Endothelial cell of umbilical vein (primary cell): ENCODE measurements at regions of chr13 and their contacts with region 1.

Region 1: GRCh38 chr13:48580185-48580803 is 47.4 kb upstream of the RCBTB2 start:
- DNase-seq: peak; percentile 87
- H3K4me3 ChIP-seq: no peak overlapping the region
- H3K27ac ChIP-seq: no peak overlapping the region
- H3K4me1 ChIP-seq: peaks cover 13% of the 10 kb centered on the region
- H3K27me3 ChIP-seq: peaks cover 0 to 4% of the 10 kb centered on the region in 2 experiments
- CTCF ChIP-seq: peak; percentile 45 to 46
- POLR2A ChIP-seq: no peak

Region 2: DNA sequence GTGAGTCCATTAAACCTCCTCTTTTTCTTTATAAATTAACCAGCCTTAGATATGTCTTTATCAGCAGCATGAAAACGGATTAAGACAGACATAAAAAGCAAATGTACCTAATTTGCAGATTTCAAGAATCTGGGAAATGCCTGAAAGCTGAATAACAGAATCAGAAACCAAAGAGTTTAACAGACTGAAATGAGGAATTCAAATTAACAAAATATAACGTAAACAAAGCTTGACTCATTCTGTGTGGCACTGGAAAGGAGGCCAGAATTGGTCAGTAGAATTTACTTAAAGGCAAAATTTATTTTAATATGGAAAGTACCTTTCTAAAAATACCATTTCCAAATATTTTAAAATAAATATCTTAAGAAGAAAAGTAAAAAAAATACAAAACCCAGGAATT is 1142.9 kb before region 1 on chr13:
- CTCF ChIA-PET with region 1: no interaction called
- POLR2A ChIA-PET with region 1: no interaction called
- dilution Hi-C with region 1: no loop called
- intact Hi-C with region 1: no loop called
- DNase-seq: no peak
- H3K4me3 ChIP-seq: no peak overlapping the region
- H3K27ac ChIP-seq: no peak overlapping the region
- H3K4me1 ChIP-seq: no peaks in the 10 kb centered on the region
- H3K27me3 ChIP-seq: no peaks in the 10 kb centered on the region
- CTCF ChIP-seq: no peak
- POLR2A ChIP-seq: no peak

Region 3: GRCh38 chr13:48126944-48127830 is 453.1 kb before region 1 on chr13:
- CTCF ChIA-PET with region 1: interaction called, 23 read pairs
- POLR2A ChIA-PET with region 1: no interaction called
- dilution Hi-C with region 1: no loop called
- intact Hi-C with region 1: loop called (anchors 5 kb)
- DNase-seq: peak; percentile 66
- H3K4me3 ChIP-seq: no peak overlapping the region
- H3K27ac ChIP-seq: no peak overlapping the region
- H3K4me1 ChIP-seq: peaks cover 15% of the 10 kb centered on the region
- H3K27me3 ChIP-seq: peaks cover 0 to under 1% of the 10 kb centered on the region in 2 experiments
- CTCF ChIP-seq: peak; percentile 58 to 62
- POLR2A ChIP-seq: no peak

Region 4: DNA sequence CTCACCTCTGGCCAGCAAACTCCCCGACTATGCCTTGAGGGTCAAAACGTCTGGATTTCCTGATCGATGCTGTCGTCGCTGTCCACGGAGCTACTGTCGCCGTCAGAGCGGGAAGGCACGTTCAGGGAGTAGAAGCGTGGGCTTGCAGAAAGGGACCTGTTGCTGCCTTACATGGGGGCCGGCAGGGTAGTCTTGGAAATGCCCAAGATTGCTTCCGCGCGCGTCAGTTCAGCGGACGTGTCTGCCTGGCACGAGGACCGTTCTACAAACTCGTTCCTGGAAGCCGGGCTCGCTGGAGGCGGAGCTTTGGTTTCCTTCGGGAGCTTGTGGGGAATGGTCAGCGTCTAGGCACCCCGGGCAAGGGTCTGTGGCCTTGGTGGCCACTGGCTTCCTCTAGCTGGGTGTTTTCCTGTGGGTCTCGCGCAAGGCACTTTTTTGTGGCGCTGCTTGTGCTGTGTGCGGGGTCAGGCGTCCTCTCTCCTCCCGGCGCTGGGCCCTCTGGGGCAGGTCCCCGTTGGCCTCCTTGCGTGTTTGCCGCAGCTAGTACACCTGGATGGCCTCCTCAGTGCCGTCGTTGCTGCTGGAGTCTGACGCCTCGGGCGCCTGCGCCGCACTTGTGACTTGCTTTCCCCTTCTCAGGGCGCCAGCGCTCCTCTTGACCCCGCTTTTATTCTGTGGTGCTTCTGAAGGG is 261.3 kb before region 1 on chr13:
- CTCF ChIA-PET with region 1: interaction called, 13 read pairs
- POLR2A ChIA-PET with region 1: no interaction called
- dilution Hi-C with region 1: no loop called
- intact Hi-C with region 1: no loop called
- DNase-seq: no peak
- H3K4me3 ChIP-seq: no peak overlapping the region
- H3K27ac ChIP-seq: no peak overlapping the region
- H3K4me1 ChIP-seq: no peaks in the 10 kb centered on the region
- H3K27me3 ChIP-seq: no peaks in the 10 kb centered on the region
- CTCF ChIP-seq: no peak
- POLR2A ChIP-seq: no peak

Region 5: DNA sequence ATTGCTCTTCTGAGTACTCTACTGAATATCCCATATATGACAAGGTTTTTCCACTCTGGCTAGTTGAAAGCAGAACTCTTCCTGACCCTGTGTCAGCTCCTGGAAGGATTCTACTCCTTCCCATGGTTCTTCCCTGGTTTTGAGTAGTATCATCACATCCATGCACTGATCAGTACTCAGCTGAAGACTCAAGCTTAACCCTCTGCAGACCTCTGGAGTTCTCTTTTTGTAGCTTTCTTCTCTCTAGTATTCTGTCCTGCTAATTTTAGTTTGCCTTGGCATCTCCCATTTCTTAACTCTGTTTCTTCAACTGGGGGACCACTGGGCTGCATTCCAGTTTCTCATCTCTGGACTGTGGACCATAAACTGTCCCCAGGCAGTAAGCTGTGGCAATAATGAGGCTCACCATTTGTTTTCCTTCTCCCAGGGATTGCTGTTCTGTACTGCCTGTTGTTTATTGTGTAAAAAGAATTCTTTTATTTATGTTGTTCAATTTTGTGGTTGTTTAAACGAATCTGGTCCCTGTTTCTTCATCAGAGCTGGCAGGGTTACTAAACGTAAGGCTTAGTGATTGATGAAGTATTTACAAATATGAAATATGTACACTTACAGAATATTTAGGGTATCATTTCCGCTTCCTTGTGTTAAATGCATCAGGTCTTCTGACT is 187.1 kb before region 1 on chr13:
- CTCF ChIA-PET with region 1: interaction called, 23 read pairs
- POLR2A ChIA-PET with region 1: no interaction called
- dilution Hi-C with region 1: no loop called
- intact Hi-C with region 1: no loop called
- DNase-seq: no peak
- H3K4me3 ChIP-seq: no peak overlapping the region
- H3K27ac ChIP-seq: no peak overlapping the region
- H3K4me1 ChIP-seq: peaks cover 3% of the 10 kb centered on the region
- H3K27me3 ChIP-seq: no peaks in the 10 kb centered on the region
- CTCF ChIP-seq: no peak
- POLR2A ChIP-seq: no peak

Region 6: GRCh38 chr13:48493851-48494250 is 86.4 kb before region 1 on chr13:
- CTCF ChIA-PET with region 1: interaction called, 13 read pairs
- POLR2A ChIA-PET with region 1: no interaction called
- dilution Hi-C with region 1: no loop called
- intact Hi-C with region 1: no loop called
- DNase-seq: peak; percentile 47
- H3K4me3 ChIP-seq: no peak overlapping the region
- H3K27ac ChIP-seq: peak overlapping the region; percentile 12
- H3K4me1 ChIP-seq: peaks cover 50% of the 10 kb centered on the region
- H3K27me3 ChIP-seq: no peaks in the 10 kb centered on the region
- CTCF ChIP-seq: no peak
- POLR2A ChIP-seq: no peak

Region 7: DNA sequence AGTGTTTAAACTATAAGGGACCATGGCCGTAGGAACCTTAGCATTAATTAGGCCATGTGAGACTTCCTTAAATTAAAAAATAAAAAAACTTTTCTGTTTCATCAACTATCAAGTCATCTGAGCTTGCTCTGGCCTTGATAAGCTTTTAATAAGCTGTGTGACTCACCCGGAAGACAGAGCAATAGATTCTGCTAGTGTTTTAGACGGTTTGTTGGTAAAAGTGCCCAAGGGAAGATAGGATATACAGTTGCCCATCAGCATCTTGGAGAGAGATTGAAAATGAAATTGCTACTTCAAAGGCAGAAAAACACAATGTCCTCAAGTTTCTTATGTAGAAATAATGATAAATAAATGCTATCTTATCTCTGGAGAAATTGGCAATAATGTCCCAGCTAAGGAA is 16.2 kb before region 1 on chr13:
- CTCF ChIA-PET with region 1: interaction called, 45 read pairs
- POLR2A ChIA-PET with region 1: no interaction called
- dilution Hi-C with region 1: no loop called
- intact Hi-C with region 1: no loop called
- DNase-seq: peak; percentile 55
- H3K4me3 ChIP-seq: no peak overlapping the region
- H3K27ac ChIP-seq: no peak overlapping the region
- H3K4me1 ChIP-seq: peaks cover 9% of the 10 kb centered on the region
- H3K27me3 ChIP-seq: no peaks in the 10 kb centered on the region
- CTCF ChIP-seq: no peak
- POLR2A ChIP-seq: no peak